ENCODE measurements at regions of chr4 and their contacts with region 1.

Region 1: DNA sequence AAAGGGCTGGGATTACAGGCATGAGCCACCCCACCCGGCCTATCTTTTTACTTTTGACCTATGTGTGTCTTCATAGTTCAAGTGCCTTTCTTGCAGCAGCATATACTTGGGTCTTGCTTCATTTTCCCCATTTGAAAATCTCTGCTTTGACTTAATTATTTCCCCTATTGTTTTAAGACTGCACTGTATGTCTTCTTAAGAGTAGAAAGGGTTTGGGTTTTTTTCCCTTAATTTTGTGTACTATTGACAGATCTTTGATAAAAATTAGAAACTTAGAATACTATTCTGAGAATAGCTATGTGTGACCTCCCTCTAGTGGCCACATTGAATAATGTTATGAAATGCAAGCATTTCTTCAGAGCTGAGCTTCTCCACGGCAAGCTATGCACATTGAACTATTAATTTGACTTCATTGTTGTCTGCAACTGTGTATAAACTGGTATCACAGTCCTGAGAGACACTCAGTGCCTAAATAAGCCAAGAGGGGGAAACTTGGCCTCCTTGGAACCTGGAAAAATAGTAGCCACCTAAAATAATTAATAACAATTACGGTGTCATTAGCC is 8.7 kb upstream of the SLC25A4 start:
- DNase-seq: no peak
- H3K4me3 Mint-ChIP-seq: no peak overlapping the region
- H3K27ac Mint-ChIP-seq: no peak overlapping the region
- H3K4me1 Mint-ChIP-seq: no peaks in the 10 kb centered on the region
- H3K27me3 Mint-ChIP-seq: peaks cover 29% of the 10 kb centered on the region

Region 2: DNA sequence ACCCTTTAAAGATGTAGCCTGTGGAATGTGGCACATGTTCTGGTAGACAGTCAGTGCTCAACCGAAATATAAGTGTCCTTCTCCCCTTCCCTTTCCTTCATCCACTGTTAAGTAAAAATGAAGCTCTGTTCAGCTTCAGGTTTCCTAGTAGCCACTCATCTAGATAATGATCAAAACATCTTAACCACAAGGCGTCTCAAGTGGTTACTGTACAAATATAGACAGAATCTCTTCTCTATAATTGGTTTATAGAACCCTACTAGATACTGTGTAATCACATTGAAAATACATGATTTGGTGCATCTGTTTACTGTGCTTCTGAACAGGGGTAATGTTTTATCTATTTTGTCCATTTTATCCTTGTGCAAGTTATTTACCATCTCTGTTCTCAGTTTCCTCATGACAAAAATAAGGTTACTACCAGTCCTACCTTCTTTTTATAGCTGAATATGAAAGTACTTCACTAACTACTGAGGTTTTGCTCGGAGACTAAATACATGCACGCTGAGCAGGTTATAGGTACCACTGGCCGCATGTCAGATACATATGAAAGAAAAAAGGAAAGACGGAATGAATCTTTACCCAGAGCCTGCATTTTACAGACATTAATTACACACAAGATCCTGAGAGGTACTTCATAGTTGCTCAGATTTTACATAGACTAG is 11.6 kb before region 1 on chr4:
- CTCF ChIA-PET with region 1: interaction called, 11 read pairs
- POLR2A ChIA-PET with region 1: no interaction called
- DNase-seq: no peak
- H3K4me3 Mint-ChIP-seq: no peak overlapping the region
- H3K27ac Mint-ChIP-seq: no peak overlapping the region
- H3K4me1 Mint-ChIP-seq: peaks cover 6% of the 10 kb centered on the region
- H3K27me3 Mint-ChIP-seq: peaks cover 52% of the 10 kb centered on the region

Measured in activated CD4-positive, alpha-beta memory T cell treated with anti-CD3 and anti-CD28 coated beads, Interleukin-2, amount 10 ng/mL, durations not matched to agents 7 days and 5 days (primary cell).